Panc1 (cell line): ENCODE measurements at regions of chr19 and their contacts with region 1.

Region 1: GRCh38 chr19:16216744-16217670 is 19.3 kb downstream of the AP1M1 start:
- DNase-seq: no peak
- ATAC-seq: peak; percentile 42
- H3K4me3 ChIP-seq: no peak overlapping the region
- H3K27ac ChIP-seq: no peak overlapping the region
- H3K4me1 ChIP-seq: no peaks in the 10 kb centered on the region
- H3K27me3 ChIP-seq: no peaks in the 10 kb centered on the region
- CTCF ChIP-seq: no peak

Region 2: DNA sequence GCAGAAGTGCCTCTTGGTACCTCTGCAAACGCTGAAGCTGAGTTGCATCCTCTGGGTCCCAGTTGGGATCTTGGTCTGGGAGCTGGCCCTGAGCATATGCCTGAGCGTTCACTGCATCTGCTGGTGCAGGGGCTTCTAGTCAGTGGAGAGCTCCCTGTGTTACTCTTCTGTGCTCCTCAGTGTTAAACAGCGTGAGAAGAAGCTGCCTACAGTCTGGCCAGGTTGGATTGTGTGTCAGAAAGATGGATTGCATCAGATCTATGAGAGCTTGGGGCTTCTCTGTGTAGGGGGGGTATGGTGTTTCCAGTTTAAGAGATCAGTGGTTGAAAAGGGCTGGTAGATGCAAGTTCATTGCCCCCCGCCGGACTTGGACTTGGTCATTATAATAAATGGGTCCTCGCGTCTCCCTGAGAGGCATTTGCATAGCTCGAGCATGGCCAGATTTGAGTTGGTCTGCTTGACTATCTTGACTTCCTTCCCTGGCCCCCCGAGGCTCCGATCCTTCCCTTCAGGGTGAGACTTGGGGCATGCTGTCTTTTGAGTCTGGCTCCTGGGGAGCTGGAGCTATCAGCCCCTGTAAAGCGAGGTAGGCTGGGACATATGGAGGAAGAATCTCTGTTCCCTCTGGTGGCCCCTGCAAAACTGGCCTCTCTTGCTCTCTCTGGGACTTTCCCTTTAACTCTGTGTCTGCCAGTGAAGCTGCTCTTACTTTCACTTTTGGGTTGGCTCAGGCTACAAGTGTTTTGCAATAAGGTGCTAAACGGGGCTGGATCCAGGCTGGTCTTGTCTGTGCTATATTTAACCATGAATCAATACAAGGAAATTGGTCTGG is 215.3 kb before region 1 on chr19:
- CTCF ChIA-PET with region 1: no interaction called
- POLR2A ChIA-PET with region 1: interaction called, 10 read pairs
- in situ Hi-C with region 1: no loop called
- intact Hi-C with region 1: no loop called
- DNase-seq: no peak
- ATAC-seq: peak; percentile 48; the same call in 1 of the 2 replicates
- H3K4me3 ChIP-seq: peak overlapping the region; percentile 11 to 33
- H3K27ac ChIP-seq: no peak overlapping the region
- H3K4me1 ChIP-seq: no peaks in the 10 kb centered on the region
- H3K27me3 ChIP-seq: no peaks in the 10 kb centered on the region
- CTCF ChIP-seq: no peak

Region 3: GRCh38 chr19:16429066-16429758 is 212.2 kb after region 1 on chr19:
- CTCF ChIA-PET with region 1: no interaction called
- POLR2A ChIA-PET with region 1: no interaction called
- in situ Hi-C with region 1: no loop called
- intact Hi-C with region 1: no loop called
- DNase-seq: no peak
- ATAC-seq: no peak
- H3K4me3 ChIP-seq: no peak overlapping the region
- H3K27ac ChIP-seq: no peak overlapping the region
- H3K4me1 ChIP-seq: no peaks in the 10 kb centered on the region
- H3K27me3 ChIP-seq: no peaks in the 10 kb centered on the region
- CTCF ChIP-seq: no peak

Region 4: DNA sequence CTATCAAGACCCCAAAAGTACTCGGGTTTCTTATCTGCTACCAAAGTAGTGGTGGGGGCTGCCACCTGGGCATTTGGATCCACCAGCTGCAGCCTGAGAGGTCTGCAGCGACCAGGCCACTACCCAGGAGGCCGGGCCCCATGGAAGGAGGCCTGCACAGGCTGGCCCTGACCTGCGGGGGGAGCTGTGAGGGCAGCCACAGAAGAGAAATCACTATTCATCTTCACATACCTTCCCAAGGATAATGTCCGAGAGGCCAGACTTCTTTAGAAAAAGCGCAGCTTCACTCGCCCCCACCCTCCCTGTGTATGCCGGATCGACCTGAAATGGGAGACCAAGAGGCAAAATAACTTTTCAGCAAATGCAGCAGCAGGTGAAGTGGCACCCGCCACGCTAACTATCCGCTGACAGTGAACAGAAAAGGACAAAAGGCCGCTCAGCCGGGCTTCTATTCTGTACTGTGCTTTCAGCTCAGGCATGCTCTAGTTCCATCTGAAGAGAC is 224.7 kb after region 1 on chr19:
- CTCF ChIA-PET with region 1: no interaction called
- POLR2A ChIA-PET with region 1: no interaction called
- in situ Hi-C with region 1: no loop called
- intact Hi-C with region 1: no loop called
- DNase-seq: no peak
- ATAC-seq: peak; percentile 71; the same call in 1 of the 2 replicates
- H3K4me3 ChIP-seq: no peak overlapping the region
- H3K27ac ChIP-seq: no peak overlapping the region
- H3K4me1 ChIP-seq: peaks cover under 1% of the 10 kb centered on the region
- H3K27me3 ChIP-seq: no peaks in the 10 kb centered on the region
- CTCF ChIP-seq: peak; percentile 70